ENCODE measurements at regions of chr9 and their contacts with region 1.

Region 1: DNA sequence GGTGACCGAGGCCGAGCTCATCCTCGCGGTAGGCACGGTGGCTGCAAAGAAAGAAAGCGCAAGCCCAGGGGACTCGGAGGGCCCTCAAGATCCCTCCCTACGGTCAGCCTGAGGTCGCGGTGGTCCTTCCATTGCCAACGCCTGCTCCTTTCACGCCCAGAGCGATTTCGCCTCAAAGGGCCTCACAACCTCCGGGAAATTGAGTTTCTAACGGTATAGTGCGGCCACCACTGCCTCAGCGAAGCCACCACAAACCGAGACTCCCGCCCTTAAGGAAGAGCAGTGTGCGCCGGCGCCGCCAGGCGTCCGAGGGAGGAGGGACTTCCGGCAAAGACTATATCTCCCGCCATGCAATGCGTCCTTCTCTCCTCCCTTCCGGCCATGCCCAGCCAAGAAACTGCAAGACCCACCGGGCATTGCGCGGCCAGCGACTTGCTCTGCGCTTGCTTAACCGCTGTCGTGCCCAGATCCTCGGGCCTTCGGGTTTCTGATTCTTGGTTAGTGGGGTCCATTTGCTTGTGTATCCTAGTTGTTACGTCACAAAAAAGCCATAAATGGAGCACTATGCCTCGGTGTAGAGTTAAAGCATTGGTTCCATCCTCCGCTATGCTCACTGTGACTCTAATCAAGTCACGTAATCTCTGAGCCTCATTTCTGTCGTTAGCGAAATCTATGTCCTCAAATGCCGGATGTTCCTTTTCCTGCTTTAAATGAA is at the start of gene HAUS6:
- DNase-seq: peak; percentile 85
- H3K4me3 ChIP-seq: peak within 1 kb of the TSS; percentile 56
- H3K27me3 ChIP-seq: no peaks in the 10 kb centered on the region
- CTCF ChIP-seq: peak; percentile 58
- polyA plus RNA-seq, gene HAUS6: 4.4 and 8.7 TPM in 2 replicates

Region 2: GRCh38 chr9:17204611-17205152 is 1898.1 kb before region 1 on chr9:
- CTCF ChIA-PET with region 1: no interaction called
- POLR2A ChIA-PET with region 1: interaction called, 18 read pairs
- DNase-seq: no peak
- H3K4me3 ChIP-seq: no peak overlapping the region
- H3K27me3 ChIP-seq: no peaks in the 10 kb centered on the region
- CTCF ChIP-seq: no peak

Region 3: DNA sequence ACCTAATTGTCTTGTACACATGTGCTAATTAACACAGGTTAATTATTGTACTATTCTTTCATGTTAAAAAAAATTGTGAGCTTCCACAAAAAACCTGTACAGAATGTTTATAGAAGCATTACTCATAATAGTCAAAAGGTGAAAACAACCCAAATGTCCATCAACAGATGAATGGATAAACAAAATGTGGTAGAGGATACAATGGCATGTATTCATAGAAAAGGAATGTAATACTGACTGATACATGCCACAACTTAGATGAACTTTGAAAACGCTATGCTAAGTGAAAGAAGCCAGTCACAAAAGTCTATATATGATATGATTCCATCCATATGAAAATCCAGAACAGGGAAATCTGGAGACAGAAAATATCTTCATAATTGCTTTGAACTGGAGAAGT is 28.0 kb before region 1 on chr9:
- CTCF ChIA-PET with region 1: no interaction called
- POLR2A ChIA-PET with region 1: no interaction called
- DNase-seq: no peak
- H3K4me3 ChIP-seq: no peak overlapping the region
- H3K27me3 ChIP-seq: no peaks in the 10 kb centered on the region
- CTCF ChIP-seq: no peak